ENCODE measurements at regions of chr9 and their contacts with region 1.

Region 1: DNA sequence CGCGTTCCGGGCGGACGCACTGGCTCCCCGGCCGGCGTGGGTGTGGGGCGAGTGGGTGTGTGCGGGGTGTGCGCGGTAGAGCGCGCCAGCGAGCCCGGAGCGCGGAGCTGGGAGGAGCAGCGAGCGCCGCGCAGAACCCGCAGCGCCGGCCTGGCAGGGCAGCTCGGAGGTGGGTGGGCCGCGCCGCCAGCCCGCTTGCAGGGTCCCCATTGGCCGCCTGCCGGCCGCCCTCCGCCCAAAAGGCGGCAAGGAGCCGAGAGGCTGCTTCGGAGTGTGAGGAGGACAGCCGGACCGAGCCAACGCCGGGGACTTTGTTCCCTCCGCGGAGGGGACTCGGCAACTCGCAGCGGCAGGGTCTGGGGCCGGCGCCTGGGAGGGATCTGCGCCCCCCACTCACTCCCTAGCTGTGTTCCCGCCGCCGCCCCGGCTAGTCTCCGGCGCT is at the start of gene DAPK1:
- DNase-seq: peak; percentile 77
- ATAC-seq: peak; percentile 93
- total RNA-seq, gene DAPK1: 5.3 TPM

Region 2: DNA sequence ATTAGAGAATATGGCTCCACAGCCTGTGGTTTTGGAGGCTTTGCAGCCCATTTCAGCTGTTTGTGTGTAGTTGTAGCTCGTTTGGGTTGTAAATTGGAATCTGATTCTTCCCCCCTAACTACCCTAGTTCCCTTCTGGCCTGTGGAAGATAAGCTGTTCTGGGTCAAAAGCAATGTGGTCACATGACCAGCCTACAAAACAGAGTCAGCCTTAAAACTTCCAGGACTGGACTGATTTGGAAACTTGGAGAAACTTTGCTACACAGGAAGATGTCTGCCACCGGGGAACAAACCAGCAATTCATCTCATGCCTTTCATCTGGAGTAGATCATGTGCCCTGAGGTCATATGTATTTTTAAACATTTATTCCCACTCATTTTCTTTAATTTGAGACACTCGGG is 83.9 kb after region 1 on chr9:
- intact Hi-C with region 1: no loop called
- DNase-seq: no peak
- ATAC-seq: peak; percentile 72

Region 3: DNA sequence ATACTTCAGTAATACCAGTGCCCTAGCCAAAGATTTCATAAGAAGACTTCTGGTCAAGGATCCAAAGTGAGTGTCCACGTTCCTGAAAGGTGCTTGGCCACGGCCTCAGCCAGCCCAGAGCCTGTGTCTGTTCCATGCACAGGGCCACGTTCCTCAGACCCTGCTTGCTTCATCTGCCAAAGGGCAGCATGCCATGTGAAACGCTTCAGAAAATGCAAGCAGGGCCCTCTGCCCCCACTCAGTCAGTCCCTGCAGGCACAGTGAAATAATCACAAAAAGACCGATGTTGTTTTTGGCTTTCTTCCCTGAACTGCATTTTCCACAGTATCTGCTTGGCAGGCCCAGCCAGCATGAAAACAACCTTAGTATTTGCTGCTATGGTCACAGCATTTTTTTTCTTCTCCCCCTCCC is 142.8 kb after region 1 on chr9:
- intact Hi-C with region 1: loop called (anchors 10 kb)
- DNase-seq: peak; percentile 49
- ATAC-seq: peak; percentile 61

Region 4: DNA sequence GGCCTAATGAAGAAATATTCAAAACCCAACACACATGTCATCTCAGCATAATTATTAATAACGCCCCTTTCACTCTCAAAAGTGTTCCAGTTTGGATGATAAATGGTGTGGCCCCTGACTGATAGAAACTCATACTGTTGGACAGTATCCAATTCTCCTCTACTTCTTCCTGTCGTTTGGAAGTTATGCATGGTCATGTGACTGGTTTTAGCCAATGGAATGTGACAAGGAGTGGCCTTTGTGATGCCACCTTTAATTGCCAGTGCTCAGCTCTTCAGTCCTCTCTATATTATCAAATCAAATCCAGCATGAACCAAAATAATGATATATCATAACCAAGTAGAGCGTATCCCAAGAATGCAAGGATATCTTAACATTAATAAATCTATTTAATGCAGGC is 772.8 kb after region 1 on chr9:
- intact Hi-C with region 1: no loop called
- DNase-seq: no peak
- ATAC-seq: no peak

Measured in Right ventricle myocardium superior (tissue), 1 donor.